Activated CD4-positive, alpha-beta T cell treated with anti-CD3 and anti-CD28 coated beads for 36 hours (primary cell): ENCODE measurements at regions of chr7 and their contacts with region 1.

Region 1: GRCh38 chr7:27784393-27785053 is 44.6 kb downstream of the TAX1BP1 start:
- DNase-seq: peak; percentile 18
- ATAC-seq: peak; percentile 77
- H3K4me3 Mint-ChIP-seq: no peak overlapping the region
- H3K27ac Mint-ChIP-seq: no peak overlapping the region
- H3K4me1 Mint-ChIP-seq: peaks cover 31% of the 10 kb centered on the region
- H3K27me3 Mint-ChIP-seq: no peaks in the 10 kb centered on the region

Region 2: GRCh38 chr7:27662490-27663205 is 121.9 kb before region 1 on chr7 and contains the start of gene HIBADH:
- CTCF ChIA-PET with region 1: no interaction called
- POLR2A ChIA-PET with region 1: no interaction called
- intact Hi-C with region 1: loop called in 1 of 2 experiments (anchors 1 kb)
- DNase-seq: peak; percentile 95
- ATAC-seq: peak; percentile 99
- H3K4me3 Mint-ChIP-seq: peak within 1 kb of the TSS; percentile 82
- H3K27ac Mint-ChIP-seq: peak within 1 kb of the TSS; percentile 74
- H3K4me1 Mint-ChIP-seq: peaks cover 8% of the 10 kb centered on the region
- H3K27me3 Mint-ChIP-seq: no peaks in the 10 kb centered on the region
- total RNA-seq, gene HIBADH: 20.3 to 20.5 TPM

Region 3: DNA sequence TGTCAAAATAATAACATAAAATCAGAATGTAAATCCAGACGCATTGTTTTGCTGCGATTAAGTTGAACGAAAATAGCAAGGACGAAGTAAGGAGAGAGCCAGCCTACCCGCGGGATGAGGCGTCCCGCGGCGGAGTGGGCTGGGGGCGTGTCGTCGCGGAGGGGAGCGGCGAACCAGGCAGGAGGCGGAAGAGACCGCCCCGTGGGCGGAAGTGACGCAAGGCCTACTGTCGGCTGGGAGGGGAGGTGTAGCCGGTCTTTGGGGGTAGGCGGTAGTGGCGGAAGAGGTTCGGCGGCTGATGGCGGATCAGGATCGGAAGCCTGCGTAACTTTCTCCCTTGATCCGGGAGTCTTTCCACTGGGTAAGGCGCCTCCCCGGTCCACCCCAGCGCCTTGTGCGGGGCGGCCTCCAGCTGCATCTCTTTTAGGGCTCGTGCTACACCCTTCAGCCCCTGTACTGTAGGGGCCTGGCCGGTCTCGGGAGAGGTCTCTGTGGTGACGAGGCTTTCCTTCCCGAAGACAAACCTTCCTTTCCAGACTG is 44.5 kb before region 1 on chr7 and contains the start of gene TAX1BP1:
- CTCF ChIA-PET with region 1: interaction called, 9 read pairs
- POLR2A ChIA-PET with region 1: no interaction called
- intact Hi-C with region 1: loop called (anchors 1 to 2 kb)
- DNase-seq: peak; percentile 98
- ATAC-seq: peak; percentile 92
- H3K4me3 Mint-ChIP-seq: peak within 1 kb of the TSS; percentile 99
- H3K27ac Mint-ChIP-seq: peak within 1 kb of the TSS; percentile 99
- H3K4me1 Mint-ChIP-seq: peaks cover 34% of the 10 kb centered on the region
- H3K27me3 Mint-ChIP-seq: no peaks in the 10 kb centered on the region
- total RNA-seq, gene TAX1BP1: 101 to 109 TPM

Region 4: DNA sequence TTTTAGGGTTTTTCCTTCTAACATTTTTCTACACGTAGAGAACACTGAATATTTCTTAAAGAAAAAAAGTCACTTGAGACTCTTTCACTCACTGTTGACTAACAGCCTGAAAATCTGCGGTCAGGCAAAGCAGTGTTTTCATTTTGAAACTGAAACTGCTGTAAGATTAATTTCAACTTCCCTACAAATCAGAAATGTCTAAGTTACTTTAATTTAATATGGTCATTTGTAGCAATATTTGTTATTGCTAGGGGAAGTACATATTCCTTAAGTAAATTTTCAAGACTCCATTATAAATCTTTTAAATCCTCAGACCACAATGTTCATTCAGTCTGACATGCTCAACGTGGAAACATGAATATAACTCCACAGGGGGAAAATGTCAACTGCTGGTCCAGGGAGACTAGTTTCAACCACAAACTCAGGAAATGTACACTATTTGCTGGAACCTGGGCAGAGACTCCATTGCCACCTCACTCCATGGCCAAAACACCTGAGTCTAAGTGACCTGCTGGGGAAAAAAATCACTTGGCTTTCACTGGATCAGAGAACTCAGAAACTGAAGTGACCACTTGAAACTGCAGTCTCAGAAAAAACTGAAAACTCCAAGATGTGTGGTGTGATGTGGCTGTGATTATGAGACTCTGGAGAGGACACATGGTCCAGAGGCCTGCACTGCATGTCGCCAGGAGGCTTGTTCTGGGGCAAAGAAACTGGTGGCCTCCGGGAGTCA is 116.7 kb after region 1 on chr7:
- CTCF ChIA-PET with region 1: no interaction called
- POLR2A ChIA-PET with region 1: no interaction called
- intact Hi-C with region 1: loop called in 1 of 2 experiments (anchors 2 kb)
- DNase-seq: peak; percentile 49
- ATAC-seq: peak; percentile 67
- H3K4me3 Mint-ChIP-seq: no peak overlapping the region
- H3K27ac Mint-ChIP-seq: no peak overlapping the region
- H3K4me1 Mint-ChIP-seq: peaks cover 37% of the 10 kb centered on the region
- H3K27me3 Mint-ChIP-seq: no peaks in the 10 kb centered on the region

Region 5: DNA sequence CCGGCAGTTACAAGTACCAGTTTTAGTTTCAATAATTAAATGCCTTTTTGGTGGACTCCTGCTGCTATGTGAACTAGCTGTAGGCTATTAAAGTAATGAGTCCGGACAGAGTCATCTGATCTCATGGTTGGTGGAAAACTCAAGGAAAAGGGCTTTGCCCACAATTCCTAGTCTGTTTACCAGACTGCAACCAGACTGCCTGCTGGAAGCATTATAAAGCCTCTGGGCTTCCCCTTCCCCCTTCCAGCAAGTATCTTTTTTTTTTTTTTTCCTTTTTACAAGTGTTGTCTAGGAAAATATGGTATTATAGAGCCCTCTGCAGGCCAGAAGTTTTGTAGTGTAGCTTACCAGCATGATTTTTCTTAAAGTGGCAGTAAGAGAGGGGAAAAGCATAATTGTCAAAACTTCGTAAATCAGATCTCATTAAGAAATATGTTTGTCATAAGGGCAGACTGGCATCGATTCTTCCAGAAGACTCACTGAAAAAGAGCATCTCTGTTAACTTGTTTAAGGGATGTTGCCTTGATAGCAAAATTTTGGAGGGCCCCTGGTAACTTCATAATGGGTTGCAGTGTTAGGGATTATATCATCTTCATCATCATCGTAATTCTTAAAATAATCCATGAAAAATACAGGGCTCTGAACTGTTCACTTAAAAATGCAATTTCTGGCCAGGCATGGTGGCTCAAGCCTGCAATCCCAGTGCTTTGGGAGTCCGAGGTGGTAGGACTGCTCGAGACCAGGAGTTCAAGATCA is 136.7 kb after region 1 on chr7:
- CTCF ChIA-PET with region 1: interaction called, 3 read pairs
- POLR2A ChIA-PET with region 1: no interaction called
- intact Hi-C with region 1: loop called in 1 of 2 experiments (anchors 2 kb)
- DNase-seq: peak; percentile 32
- ATAC-seq: peak; percentile 44
- H3K4me3 Mint-ChIP-seq: no peak overlapping the region
- H3K27ac Mint-ChIP-seq: no peak overlapping the region
- H3K4me1 Mint-ChIP-seq: no peaks in the 10 kb centered on the region
- H3K27me3 Mint-ChIP-seq: no peaks in the 10 kb centered on the region